Activated CD4-positive, alpha-beta T cell treated with anti-CD3 and anti-CD28 coated beads for 36 hours (primary cell): ENCODE measurements at regions of chr12 and their contacts with region 1.

Region 1: GRCh38 chr12:121128970-121129810 is 3.5 kb upstream of the P2RX7 start:
- DNase-seq: peak; percentile 90
- ATAC-seq: peak; percentile 83
- H3K4me3 Mint-ChIP-seq: peak overlapping the region; percentile 63
- H3K27ac Mint-ChIP-seq: peak overlapping the region; percentile 98
- H3K4me1 Mint-ChIP-seq: peaks cover 68% of the 10 kb centered on the region
- H3K27me3 Mint-ChIP-seq: no peaks in the 10 kb centered on the region

Region 2: DNA sequence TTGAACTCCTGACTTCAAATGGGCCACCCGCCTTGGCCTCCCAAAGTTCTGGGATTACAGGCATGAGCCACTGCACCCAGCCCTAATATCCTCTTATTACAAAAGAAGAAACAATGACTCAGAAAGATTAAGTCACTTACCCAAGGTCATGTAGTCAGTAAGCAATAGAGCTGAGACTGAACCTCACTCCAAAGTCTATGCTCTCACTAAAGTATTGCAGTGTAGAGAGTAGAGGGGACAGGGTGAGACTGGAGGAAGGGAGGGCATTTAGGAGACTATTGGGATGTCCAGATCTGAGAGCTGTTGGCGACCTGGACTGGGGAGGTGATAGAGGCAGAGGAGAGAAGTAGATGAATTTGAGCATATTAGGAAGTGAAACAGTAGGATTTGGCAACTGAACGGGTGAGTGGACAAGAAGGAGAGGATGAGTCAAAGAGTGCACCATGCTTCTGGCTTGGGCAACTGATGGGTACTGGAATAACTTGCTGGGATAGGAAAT is 15.3 kb after region 1 on chr12:
- CTCF ChIA-PET with region 1: no interaction called
- POLR2A ChIA-PET with region 1: no interaction called
- intact Hi-C with region 1: loop called in 1 of 2 experiments (anchors 1 kb)
- DNase-seq: peak; percentile 33
- ATAC-seq: peak; percentile 74
- H3K4me3 Mint-ChIP-seq: no peak overlapping the region
- H3K27ac Mint-ChIP-seq: peak overlapping the region; percentile 72
- H3K4me1 Mint-ChIP-seq: peaks cover 25% of the 10 kb centered on the region
- H3K27me3 Mint-ChIP-seq: no peaks in the 10 kb centered on the region

Region 3: DNA sequence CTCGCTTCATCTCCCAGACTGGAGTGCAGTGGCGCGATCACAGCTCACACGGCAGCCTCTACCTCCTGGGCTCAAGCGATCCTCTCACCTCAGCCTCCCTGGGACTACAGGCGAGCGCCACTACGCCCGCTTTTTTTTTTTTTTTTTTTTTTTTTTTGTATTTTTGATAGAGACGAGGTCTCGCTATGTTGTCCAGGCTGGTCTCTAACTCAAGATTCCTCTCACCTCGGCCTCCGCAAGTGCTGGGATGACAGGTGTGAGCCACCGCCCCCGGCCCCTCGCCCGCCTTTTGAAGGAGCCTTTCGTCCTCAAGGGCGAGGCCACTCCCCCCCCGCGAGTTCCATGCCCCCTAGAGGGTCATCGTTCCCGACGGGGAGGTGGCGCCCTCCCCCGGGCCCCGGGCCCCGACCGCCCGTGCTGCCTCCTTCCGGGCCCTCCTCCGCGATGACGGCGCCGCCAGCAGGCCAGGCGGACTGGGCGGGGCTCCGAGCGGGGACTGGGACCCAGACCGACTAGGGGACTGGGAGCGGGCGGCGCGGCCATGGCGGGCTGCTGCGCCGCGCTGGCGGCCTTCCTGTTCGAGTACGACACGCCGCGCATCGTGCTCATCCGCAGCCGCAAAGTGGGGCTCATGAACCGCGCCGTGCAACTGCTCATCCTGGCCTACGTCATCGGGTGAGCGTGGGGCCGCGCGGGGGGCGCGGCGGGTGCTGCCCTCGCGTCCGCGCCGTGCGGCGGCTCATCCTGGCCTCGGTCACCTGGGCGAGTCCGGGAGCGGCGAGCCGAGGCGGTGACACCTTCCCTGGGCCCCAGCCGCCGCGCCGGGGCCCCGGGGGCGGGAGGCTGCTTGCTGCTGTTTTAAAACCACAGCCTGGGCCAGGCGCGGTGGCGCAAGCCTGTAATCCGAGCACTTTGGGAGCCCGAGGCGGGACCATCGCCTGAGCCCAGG is 80.7 kb after region 1 on chr12 and contains the start of gene P2RX4:
- CTCF ChIA-PET with region 1: no interaction called
- POLR2A ChIA-PET with region 1: interaction called, 3 read pairs
- intact Hi-C with region 1: loop called (anchors 1 to 5 kb)
- DNase-seq: peak; percentile 93
- ATAC-seq: peak; percentile 79
- H3K4me3 Mint-ChIP-seq: peak within 1 kb of the TSS; percentile 79
- H3K27ac Mint-ChIP-seq: peak within 1 kb of the TSS; percentile 89
- H3K4me1 Mint-ChIP-seq: peaks cover 31% of the 10 kb centered on the region
- H3K27me3 Mint-ChIP-seq: no peaks in the 10 kb centered on the region
- total RNA-seq, gene P2RX4: 21.2 to 21.6 TPM

Region 4: DNA sequence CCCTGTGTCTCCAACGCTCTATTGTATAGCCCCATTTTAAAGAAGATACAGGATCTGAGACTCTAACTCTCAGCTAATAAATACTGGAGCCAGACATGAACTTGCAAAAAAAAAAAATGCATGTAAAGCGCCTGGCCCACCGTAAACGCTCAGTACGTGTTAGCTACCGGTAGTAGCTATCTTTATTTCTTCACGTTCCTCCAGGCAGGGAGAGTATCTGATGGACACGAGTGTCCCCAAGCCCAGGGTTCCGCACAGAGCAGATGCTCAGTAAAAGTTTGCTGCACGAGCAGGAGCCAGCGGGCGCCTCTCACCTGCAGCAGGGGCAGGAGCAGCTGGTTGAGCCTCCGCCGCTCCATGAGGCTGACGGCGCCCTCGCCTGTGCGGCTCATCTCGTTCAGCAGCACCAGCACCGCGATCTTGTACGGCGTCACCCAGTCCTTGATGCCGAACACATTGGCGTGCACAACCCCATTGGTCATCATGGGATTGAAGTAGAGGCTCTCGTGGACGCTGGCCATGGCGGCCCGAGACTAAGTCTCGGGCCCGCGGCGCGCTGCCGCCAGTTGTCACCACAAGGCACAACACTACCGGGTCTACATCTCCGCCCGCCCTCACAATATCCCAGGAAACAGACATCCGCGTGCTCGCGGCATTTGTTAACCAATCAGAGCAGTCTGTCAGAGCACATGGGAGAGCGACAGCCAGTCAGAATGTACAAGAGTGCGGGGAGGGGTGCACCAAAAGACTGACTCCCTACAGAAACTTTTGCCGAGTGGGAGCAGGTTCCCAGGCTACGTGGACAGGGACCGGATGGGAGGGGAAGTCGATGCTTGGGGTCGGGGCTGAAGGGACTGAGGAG is 222.9 kb after region 1 on chr12 and contains the start of gene ANAPC5:
- CTCF ChIA-PET with region 1: no interaction called
- POLR2A ChIA-PET with region 1: no interaction called
- intact Hi-C with region 1: loop called in 1 of 2 experiments (anchors 1 kb)
- DNase-seq: peak; percentile 94
- ATAC-seq: peak; percentile 99
- H3K4me3 Mint-ChIP-seq: peak within 1 kb of the TSS; percentile 92
- H3K27ac Mint-ChIP-seq: peak within 1 kb of the TSS; percentile 97
- H3K4me1 Mint-ChIP-seq: peaks cover 24% of the 10 kb centered on the region
- H3K27me3 Mint-ChIP-seq: peaks cover under 1% of the 10 kb centered on the region
- total RNA-seq, gene ANAPC5: 113 to 118 TPM

Region 5: GRCh38 chr12:121383601-121384021 is 254.4 kb after region 1 on chr12:
- CTCF ChIA-PET with region 1: no interaction called
- POLR2A ChIA-PET with region 1: no interaction called
- intact Hi-C with region 1: no loop called
- DNase-seq: peak; percentile 10
- ATAC-seq: no peak
- H3K4me3 Mint-ChIP-seq: no peak overlapping the region
- H3K27ac Mint-ChIP-seq: no peak overlapping the region
- H3K4me1 Mint-ChIP-seq: peaks cover 5% of the 10 kb centered on the region
- H3K27me3 Mint-ChIP-seq: no peaks in the 10 kb centered on the region

Region 6: DNA sequence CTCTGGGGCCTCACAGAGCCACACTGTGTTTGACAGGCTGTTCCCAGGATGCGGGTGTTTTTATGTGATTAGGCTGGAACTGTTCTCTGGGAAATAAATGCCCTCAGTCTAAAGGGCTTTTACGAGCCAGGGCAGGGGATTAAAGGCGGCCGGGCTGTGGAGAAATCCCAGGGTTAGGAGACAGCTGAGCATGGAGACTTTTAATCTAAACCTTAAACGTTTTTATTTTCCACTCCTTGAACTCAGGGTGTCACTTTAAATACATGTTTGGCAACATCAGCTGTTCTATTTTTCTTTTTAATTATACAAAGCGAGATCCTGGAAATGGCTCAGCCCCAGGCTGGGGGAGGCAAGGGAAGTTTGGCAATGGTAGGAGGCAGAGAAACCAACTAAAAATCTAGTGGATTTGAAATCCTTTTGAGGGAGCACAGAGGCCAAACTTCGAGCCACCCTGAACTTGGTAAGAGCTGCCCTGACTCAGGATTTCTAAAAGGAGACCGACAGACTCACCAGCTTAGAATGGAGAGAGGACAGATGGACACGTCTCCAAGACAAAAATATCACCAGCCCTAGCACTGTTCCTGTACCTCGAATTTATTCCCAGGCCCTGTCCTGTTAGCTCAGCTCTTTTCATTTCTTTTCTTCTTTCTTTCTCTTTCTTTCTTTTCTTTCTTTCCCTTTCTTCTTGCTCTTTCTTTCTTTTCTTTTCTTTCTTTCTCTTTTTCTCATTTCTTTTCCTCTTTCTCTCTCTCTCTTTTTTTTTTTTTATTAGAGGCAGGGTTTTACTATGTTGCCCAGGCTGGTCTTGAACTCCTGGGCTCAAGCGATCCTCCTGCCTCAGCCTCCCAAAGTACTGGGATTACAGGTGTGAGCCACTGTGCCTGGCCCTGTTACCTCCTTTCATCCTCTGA is 481.3 kb after region 1 on chr12:
- CTCF ChIA-PET with region 1: no interaction called
- POLR2A ChIA-PET with region 1: no interaction called
- intact Hi-C with region 1: no loop called
- DNase-seq: no peak
- ATAC-seq: no peak
- H3K4me3 Mint-ChIP-seq: no peak overlapping the region
- H3K27ac Mint-ChIP-seq: peak overlapping the region; percentile 11
- H3K4me1 Mint-ChIP-seq: peaks cover 6% of the 10 kb centered on the region
- H3K27me3 Mint-ChIP-seq: no peaks in the 10 kb centered on the region